ENCODE measurements at regions of chr20 and their contacts with region 1.

Region 1: DNA sequence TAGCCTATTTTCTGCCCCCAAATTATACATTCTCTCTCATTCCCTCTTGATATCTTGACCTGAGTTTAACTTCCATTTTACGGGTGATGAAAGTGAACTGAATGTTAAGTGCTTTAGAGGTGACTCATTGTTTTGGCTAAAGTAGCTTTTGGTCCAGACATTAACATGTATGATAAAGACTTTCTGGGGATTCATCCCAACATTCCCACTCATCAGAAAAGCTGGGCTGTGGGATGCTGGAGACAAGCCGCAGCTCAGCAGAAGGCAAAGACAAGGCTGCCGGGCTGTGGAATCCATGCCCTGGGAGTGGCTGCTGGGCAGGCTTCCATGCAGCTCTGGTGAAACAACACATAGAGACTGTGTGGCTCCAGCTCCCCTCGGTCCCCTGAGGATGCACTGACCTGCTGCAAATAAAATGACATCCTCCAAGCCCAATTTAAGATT is 89.9 kb upstream of the SYNDIG1 start:
- DNase-seq: peak; percentile 75
- H3K4me3 ChIP-seq: no peak overlapping the region
- H3K27ac ChIP-seq: peak overlapping the region in 2 of 4 donors; percentile 40 to 60
- H3K4me1 ChIP-seq: peaks cover 0 to 38% (median 28%) of the 10 kb centered on the region in 4 donors
- H3K27me3 ChIP-seq: no peaks in the 10 kb centered on the region
- CTCF ChIP-seq: no peak
- EP300 ChIP-seq: no peak
- POLR2A ChIP-seq: no peak

Region 2: GRCh38 chr20:24277196-24277595 is 102.3 kb before region 1 on chr20:
- intact Hi-C with region 1: no loop called
- DNase-seq: no peak
- H3K4me3 ChIP-seq: no peak overlapping the region
- H3K27ac ChIP-seq: no peak overlapping the region
- H3K4me1 ChIP-seq: no peaks in the 10 kb centered on the region
- H3K27me3 ChIP-seq: no peaks in the 10 kb centered on the region
- CTCF ChIP-seq: no peak
- EP300 ChIP-seq: no peak
- POLR2A ChIP-seq: no peak

Region 3: DNA sequence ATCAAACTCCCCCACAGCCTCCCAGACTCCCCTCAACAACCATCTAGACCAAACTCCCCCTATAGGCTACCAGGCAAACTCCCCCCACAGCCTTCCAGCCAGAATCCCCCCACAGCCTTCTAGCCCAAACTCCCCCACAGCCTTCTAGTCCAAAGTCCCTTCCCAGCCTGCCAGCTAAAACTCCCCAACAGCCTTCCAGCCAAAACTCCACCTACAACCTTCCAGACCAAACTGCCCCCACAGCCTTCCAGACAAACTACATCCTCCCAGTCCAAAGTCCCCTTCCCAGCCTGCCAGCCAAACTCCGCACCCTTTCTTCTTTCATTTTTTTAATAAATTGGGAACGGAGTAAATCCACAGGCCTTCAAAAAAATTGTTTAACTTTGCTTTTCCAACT is 52.5 kb after region 1 on chr20:
- intact Hi-C with region 1: loop called (anchors 5 kb)
- DNase-seq: no peak
- H3K4me3 ChIP-seq: no peak overlapping the region
- H3K27ac ChIP-seq: no peak overlapping the region
- H3K4me1 ChIP-seq: peaks cover 0 to under 1% (median 0%) of the 10 kb centered on the region in 4 donors
- H3K27me3 ChIP-seq: peaks cover 0 to 41% (median 5%) of the 10 kb centered on the region in 3 donors
- CTCF ChIP-seq: no peak
- EP300 ChIP-seq: no peak
- POLR2A ChIP-seq: no peak

Region 4: GRCh38 chr20:24469116-24469893 is 89.8 kb after region 1 on chr20 and contains the start of gene SYNDIG1:
- intact Hi-C with region 1: loop called (anchors 10 kb)
- DNase-seq: peak; percentile 48
- H3K4me3 ChIP-seq: peak within 1 kb of the TSS; percentile 22 to 56 (median 46)
- H3K27ac ChIP-seq: no peak within 1 kb of the TSS
- H3K4me1 ChIP-seq: peaks cover 0 to 40% (median 30%) of the 10 kb centered on the region in 4 donors
- H3K27me3 ChIP-seq: peaks cover 5 to 63% (median 44%) of the 10 kb centered on the region in 3 donors
- CTCF ChIP-seq: no peak
- EP300 ChIP-seq: no peak
- POLR2A ChIP-seq: no peak
- total RNA-seq, gene SYNDIG1: 0.16 to 0.36 (median 0.27) TPM in 3 of 4 donors, not detected in the other